GM18951 (cell line): ENCODE measurements at regions of chrX and their contacts with region 1.

Region 1: GRCh38 chrX:151724563-151725337 is 8.9 kb downstream of the FATE1 start:
- POLR2A ChIP-seq: no peak

Region 2: DNA sequence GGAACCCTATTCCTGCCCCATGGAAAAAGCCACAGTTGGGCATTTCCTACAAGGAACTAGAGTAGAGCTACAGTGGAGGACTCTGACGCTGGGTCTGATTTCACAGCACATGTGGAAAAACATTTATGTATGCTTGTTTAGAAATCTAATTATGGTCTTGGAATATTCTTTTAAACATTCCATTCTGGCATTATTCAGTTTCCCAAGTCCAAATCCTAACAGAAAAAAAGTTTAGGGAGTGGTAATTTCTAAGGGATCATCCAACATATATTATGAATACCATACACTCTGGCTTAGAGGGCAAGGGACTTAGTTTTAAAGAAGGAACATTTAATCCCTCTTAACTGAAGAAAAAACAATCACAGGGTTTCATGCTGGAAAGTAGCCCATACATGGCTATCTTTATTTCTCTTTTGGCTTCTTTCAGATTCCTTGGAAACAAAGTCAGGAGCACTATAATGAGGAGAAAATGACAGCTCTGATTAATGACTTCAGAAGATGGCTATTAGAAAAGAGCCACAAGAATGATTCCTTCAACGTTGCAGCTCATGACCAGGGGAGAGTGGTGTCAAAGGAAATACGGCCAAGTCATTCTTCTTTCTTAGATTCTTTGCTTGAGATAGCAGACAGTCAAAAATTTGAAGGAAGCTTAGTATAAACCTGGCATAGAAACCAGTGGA is 65.9 kb after region 1 on chrX:
- in situ Hi-C with region 1: no loop called
- POLR2A ChIP-seq: no peak

Region 3: GRCh38 chrX:151966266-151966665 is 241.5 kb after region 1 on chrX:
- in situ Hi-C with region 1: no loop called
- POLR2A ChIP-seq: no peak

Region 4: GRCh38 chrX:152154050-152154449 is 429.3 kb after region 1 on chrX:
- in situ Hi-C with region 1: no loop called
- POLR2A ChIP-seq: no peak

Region 5: GRCh38 chrX:152632445-152633097 is 907.8 kb after region 1 on chrX:
- in situ Hi-C with region 1: loop called (anchors 25 kb)
- POLR2A ChIP-seq: no peak